ENCODE measurements at regions of chr4 and their contacts with region 1.

Region 1: GRCh38 chr4:173516621-173517524 is 13.2 kb downstream of the HAND2 start:
- DNase-seq: no peak
- ATAC-seq: peak in 5 of 8 donors; percentile 1 to 7 (median 2)
- H3K4me3 ChIP-seq: peak overlapping the region; percentile 7 to 56 (median 44)
- H3K27ac ChIP-seq: peak overlapping the region; percentile 74 to 97 (median 96)
- H3K4me1 ChIP-seq: peaks cover 3 to 55% (median 25%) of the 10 kb centered on the region in 9 donors
- H3K27me3 ChIP-seq: peaks cover 0 to 99% (median 44%) of the 10 kb centered on the region in 7 donors
- CTCF ChIP-seq: no peak

Region 2: GRCh38 chr4:173685165-173685830 is 168.4 kb after region 1 on chr4:
- intact Hi-C with region 1: loop called in 1 of 10 experiments (anchors 5 kb)
- DNase-seq: no peak
- ATAC-seq: no peak
- H3K4me3 ChIP-seq: no peak overlapping the region
- H3K27ac ChIP-seq: peak overlapping the region; percentile 43 to 89 (median 78)
- H3K4me1 ChIP-seq: peaks cover 0 to 39% (median 9%) of the 10 kb centered on the region in 9 donors
- H3K27me3 ChIP-seq: no peaks in the 10 kb centered on the region
- CTCF ChIP-seq: no peak